ENCODE measurements at regions of chr9 and their contacts with region 1.

Region 1: GRCh38 chr9:87497604-87498045 is at the start of gene DAPK1:
- DNase-seq: peak; percentile 64 to 84 (median 78)
- H3K4me3 ChIP-seq: peak within 1 kb of the TSS; percentile 87
- H3K27ac ChIP-seq: peak within 1 kb of the TSS; percentile 84 to 91
- H3K4me1 ChIP-seq: peaks cover 5% of the 10 kb centered on the region
- H3K27me3 ChIP-seq: no peaks in the 10 kb centered on the region
- CTCF ChIP-seq: peak in 1 of 3 donors; percentile 48
- EP300 ChIP-seq: no peak
- POLR2A ChIP-seq: peak; percentile 40
- total RNA-seq, gene DAPK1: 72.0 to 133 (median 103) TPM

Region 2: GRCh38 chr9:87109851-87110250 is 387.8 kb before region 1 on chr9:
- intact Hi-C with region 1: loop called in 1 of 4 experiments (anchors 5 kb)
- DNase-seq: no peak
- H3K4me3 ChIP-seq: no peak overlapping the region
- H3K27ac ChIP-seq: no peak overlapping the region
- H3K4me1 ChIP-seq: peaks cover 7% of the 10 kb centered on the region
- H3K27me3 ChIP-seq: no peaks in the 10 kb centered on the region
- CTCF ChIP-seq: no peak
- EP300 ChIP-seq: no peak
- POLR2A ChIP-seq: no peak

Region 3: DNA sequence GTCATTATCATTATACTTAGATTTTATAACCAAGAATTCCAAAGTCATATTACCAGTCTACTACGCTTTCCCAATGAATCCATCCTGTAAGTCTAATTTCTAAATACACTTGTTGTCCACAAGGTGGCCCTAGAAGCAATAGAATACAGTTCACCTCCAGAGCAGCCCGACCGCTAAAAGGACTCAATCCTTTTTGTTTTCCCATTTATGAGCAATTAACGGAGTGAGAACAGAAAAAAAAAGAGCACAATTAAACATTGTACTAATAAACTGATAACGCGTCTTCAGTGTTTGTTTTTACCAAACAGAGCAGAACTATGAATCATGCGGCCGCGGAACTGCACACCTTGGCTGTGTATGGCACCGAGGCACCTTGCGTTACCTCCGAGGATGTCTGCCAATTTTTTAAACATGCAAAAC is 160.7 kb before region 1 on chr9:
- intact Hi-C with region 1: loop called in 3 of 4 experiments (anchors 5 to 10 kb)
- DNase-seq: peak; percentile 42 to 65 (median 47)
- H3K4me3 ChIP-seq: peak overlapping the region; percentile 37
- H3K27ac ChIP-seq: no peak overlapping the region
- H3K4me1 ChIP-seq: no peaks in the 10 kb centered on the region
- H3K27me3 ChIP-seq: no peaks in the 10 kb centered on the region
- CTCF ChIP-seq: peak; percentile 9 to 90 (median 85)
- EP300 ChIP-seq: no peak
- POLR2A ChIP-seq: no peak

Region 4: DNA sequence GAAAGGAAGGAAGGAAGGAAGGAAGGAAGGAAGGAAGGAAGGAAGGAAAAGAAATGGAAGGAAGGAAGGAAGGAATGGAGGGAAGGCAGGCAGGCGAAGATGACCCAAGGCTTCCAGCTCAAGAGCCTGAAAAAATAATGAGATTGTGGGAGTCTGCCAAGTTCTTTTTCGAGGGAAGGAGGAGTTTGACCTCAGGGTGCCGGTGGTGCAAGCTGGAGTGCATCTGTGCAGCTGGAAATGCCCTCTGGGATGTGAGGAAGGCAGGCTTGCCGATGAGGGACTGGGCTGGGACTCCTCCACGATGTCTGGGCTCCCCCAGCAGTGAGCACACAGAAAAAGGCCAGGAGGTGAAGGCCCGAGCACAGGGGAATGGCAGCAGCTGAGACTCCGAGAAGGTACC is 154.9 kb before region 1 on chr9:
- intact Hi-C with region 1: loop called in 3 of 4 experiments (anchors 5 to 10 kb)
- DNase-seq: peak; percentile 74 to 85 (median 80)
- H3K4me3 ChIP-seq: no peak overlapping the region
- H3K27ac ChIP-seq: peak overlapping the region; percentile 33 to 64
- H3K4me1 ChIP-seq: peaks cover 5% of the 10 kb centered on the region
- H3K27me3 ChIP-seq: no peaks in the 10 kb centered on the region
- CTCF ChIP-seq: no peak
- EP300 ChIP-seq: no peak
- POLR2A ChIP-seq: no peak

Region 5: DNA sequence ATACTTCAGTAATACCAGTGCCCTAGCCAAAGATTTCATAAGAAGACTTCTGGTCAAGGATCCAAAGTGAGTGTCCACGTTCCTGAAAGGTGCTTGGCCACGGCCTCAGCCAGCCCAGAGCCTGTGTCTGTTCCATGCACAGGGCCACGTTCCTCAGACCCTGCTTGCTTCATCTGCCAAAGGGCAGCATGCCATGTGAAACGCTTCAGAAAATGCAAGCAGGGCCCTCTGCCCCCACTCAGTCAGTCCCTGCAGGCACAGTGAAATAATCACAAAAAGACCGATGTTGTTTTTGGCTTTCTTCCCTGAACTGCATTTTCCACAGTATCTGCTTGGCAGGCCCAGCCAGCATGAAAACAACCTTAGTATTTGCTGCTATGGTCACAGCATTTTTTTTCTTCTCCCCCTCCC is 142.8 kb after region 1 on chr9:
- intact Hi-C with region 1: loop called in 1 of 4 experiments (anchors 10 kb)
- DNase-seq: peak; percentile 45 to 79 (median 69)
- H3K4me3 ChIP-seq: no peak overlapping the region
- H3K27ac ChIP-seq: peak overlapping the region in 1 of 2 donors; percentile 9
- H3K4me1 ChIP-seq: peaks cover 23% of the 10 kb centered on the region
- H3K27me3 ChIP-seq: no peaks in the 10 kb centered on the region
- CTCF ChIP-seq: no peak
- EP300 ChIP-seq: no peak
- POLR2A ChIP-seq: no peak

Region 6: GRCh38 chr9:87656485-87656884 is 158.9 kb after region 1 on chr9:
- intact Hi-C with region 1: loop called in 2 of 4 experiments (anchors 5 to 10 kb)
- DNase-seq: peak in 2 of 5 donors; percentile 57 to 63
- H3K4me3 ChIP-seq: no peak overlapping the region
- H3K27ac ChIP-seq: no peak overlapping the region
- H3K4me1 ChIP-seq: peaks cover 5% of the 10 kb centered on the region
- H3K27me3 ChIP-seq: no peaks in the 10 kb centered on the region
- CTCF ChIP-seq: peak in 1 of 3 donors; percentile 6
- EP300 ChIP-seq: no peak
- POLR2A ChIP-seq: no peak

Measured in ovary (tissue), 10 donors.